Activated CD4-positive, alpha-beta T cell treated with anti-CD3 and anti-CD28 coated beads for 36 hours (primary cell): ENCODE measurements at regions of chr5 and their contacts with region 1.

Region 1: DNA sequence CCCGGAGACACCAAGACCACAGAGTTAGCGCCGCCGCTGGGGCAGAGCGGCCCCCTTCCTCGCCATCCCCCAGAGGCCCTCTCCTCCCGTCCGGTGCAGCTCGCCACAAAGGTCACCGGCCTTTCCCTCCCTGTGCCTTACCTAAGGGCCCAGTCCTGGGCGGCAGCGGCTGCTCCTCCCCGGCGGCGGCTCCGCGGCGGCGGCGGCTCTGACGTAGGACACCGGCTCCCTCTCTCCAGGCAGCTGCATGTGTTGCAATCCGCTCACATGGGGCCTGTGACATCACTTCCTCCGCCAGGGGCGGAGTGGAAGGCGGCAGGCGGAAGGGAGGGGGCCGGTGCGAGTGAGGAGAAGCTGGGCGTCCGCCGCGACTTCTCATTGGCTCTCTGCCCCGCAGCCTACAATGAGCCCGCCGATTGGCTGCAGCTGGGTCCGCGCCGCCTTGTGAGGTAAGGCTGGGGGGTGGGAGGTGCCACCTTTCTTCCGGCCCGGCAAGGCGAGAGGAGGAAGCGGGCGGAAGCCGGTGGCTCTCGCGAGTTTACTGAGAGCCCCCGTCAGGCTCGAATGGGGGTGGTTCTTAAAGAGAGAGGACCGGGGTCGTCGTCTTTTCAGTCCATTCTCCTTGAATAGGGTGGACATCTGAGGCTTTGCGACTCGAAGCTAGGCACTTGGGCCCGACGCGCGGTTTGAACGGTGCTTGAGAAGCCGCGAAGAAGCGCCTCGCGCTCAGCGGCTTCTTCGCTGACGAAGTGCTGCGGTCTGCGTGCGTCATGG is at the start of gene ETF1:
- DNase-seq: peak; percentile 100
- ATAC-seq: peak; percentile 94
- H3K4me3 Mint-ChIP-seq: peak within 1 kb of the TSS; percentile 100
- H3K27ac Mint-ChIP-seq: peak within 1 kb of the TSS; percentile 100
- H3K4me1 Mint-ChIP-seq: peaks cover 67% of the 10 kb centered on the region
- H3K27me3 Mint-ChIP-seq: no peaks in the 10 kb centered on the region
- total RNA-seq, gene ETF1: 140 to 156 TPM

Region 2: DNA sequence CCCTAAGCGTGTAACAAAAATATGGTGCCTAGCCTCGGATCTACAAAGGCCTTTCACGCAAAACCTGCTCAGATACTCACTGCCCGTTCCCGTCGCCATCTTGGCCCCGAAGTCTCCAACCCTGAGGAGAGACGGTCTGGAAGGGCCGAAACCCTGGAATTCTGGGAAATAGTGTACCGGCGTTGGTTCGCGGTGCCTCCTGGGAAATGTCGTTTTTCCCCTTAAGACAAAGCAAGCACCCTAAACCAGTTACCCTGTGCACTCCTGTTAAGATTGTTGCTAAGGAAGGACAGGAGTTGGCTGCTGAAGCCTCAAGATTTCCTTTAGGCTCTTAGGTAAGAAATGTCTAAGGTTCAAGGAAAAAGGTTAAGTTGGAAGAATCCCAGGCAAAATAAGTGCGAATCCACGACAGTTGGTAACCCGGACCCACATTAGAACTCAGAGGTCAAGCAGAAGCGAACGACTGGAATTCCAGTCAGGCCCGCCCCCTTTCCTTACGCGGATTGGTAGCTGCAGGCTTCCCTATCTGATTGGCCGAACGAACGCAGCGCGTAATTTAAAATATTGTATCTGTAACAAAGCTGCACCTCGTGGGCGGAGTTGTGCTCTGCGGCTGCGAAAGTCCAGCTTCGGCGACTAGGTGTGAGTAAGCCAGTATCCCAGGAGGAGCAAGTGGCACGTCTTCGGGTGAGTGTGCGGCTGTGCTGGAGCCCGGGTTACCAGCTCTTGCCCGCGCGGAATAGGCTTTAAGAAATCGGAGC is 364.4 kb before region 1 on chr5 and contains the starts of genes BRD8 and KIF20A:
- CTCF ChIA-PET with region 1: no interaction called
- POLR2A ChIA-PET with region 1: interaction called, 3 read pairs
- intact Hi-C with region 1: loop called (anchors 1 to 2 kb)
- DNase-seq: peak; percentile 96
- ATAC-seq: peak; percentile 93
- H3K4me3 Mint-ChIP-seq: no peak within 1 kb of the TSS
- H3K27ac Mint-ChIP-seq: peak within 1 kb of the TSS; percentile 73
- H3K4me1 Mint-ChIP-seq: peaks cover 16% of the 10 kb centered on the region
- H3K27me3 Mint-ChIP-seq: no peaks in the 10 kb centered on the region
- total RNA-seq, gene BRD8: 60.7 to 61.4 TPM
- total RNA-seq, gene KIF20A: 66.6 to 76.3 TPM

Region 3: GRCh38 chr5:138337685-138338410 is 205.3 kb before region 1 on chr5 and contains the start of gene FAM53C:
- CTCF ChIA-PET with region 1: no interaction called
- POLR2A ChIA-PET with region 1: interaction called, 6 read pairs
- intact Hi-C with region 1: loop called (anchors 1 kb)
- DNase-seq: peak; percentile 95
- ATAC-seq: peak; percentile 88
- H3K4me3 Mint-ChIP-seq: peak within 1 kb of the TSS; percentile 84
- H3K27ac Mint-ChIP-seq: peak within 1 kb of the TSS; percentile 97
- H3K4me1 Mint-ChIP-seq: peaks cover 38% of the 10 kb centered on the region
- H3K27me3 Mint-ChIP-seq: no peaks in the 10 kb centered on the region
- total RNA-seq, gene FAM53C: 22.8 to 25.9 TPM

Region 4: GRCh38 chr5:138491669-138492559 is 51.2 kb before region 1 on chr5:
- CTCF ChIA-PET with region 1: no interaction called
- POLR2A ChIA-PET with region 1: no interaction called
- intact Hi-C with region 1: loop called in 1 of 2 experiments (anchors 1 kb)
- DNase-seq: peak; percentile 92
- ATAC-seq: peak; percentile 99
- H3K4me3 Mint-ChIP-seq: peak overlapping the region; percentile 84
- H3K27ac Mint-ChIP-seq: peak overlapping the region; percentile 79
- H3K4me1 Mint-ChIP-seq: peaks cover 15% of the 10 kb centered on the region
- H3K27me3 Mint-ChIP-seq: peaks cover 23% of the 10 kb centered on the region

Region 5: DNA sequence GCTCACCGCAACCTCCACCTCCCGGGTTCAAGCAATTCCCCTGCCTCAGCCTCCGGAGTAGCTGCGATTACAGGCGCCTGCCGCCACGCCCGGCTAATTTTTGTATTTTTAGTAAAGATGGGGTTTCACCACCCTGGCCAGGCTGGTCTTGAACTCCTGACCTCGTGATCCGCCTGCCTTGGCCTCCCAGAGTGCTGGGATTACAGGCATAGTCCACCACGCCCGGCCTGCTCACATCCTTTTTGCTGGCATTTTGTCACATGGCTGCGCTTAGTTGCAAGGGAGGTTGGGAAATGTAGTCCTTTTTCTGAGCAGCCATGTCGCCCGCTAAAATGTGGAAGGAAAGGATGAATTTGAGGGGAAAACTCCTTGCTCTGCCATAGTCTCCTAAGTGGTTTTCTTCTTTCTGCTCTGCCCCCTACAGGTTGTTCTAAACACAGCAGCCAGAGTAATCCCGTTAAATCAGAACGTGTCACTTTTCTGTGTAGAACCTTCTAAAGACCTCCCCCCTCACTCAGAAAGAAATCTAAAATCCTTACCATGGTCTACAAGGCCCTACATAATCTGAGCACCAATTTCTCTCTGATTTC is 89.9 kb after region 1 on chr5:
- CTCF ChIA-PET with region 1: no interaction called
- POLR2A ChIA-PET with region 1: no interaction called
- intact Hi-C with region 1: loop called in 1 of 2 experiments (anchors 1 kb)
- DNase-seq: peak; percentile 47
- ATAC-seq: peak; percentile 88
- H3K4me3 Mint-ChIP-seq: no peak overlapping the region
- H3K27ac Mint-ChIP-seq: no peak overlapping the region
- H3K4me1 Mint-ChIP-seq: no peaks in the 10 kb centered on the region
- H3K27me3 Mint-ChIP-seq: peaks cover 36% of the 10 kb centered on the region

Region 6: DNA sequence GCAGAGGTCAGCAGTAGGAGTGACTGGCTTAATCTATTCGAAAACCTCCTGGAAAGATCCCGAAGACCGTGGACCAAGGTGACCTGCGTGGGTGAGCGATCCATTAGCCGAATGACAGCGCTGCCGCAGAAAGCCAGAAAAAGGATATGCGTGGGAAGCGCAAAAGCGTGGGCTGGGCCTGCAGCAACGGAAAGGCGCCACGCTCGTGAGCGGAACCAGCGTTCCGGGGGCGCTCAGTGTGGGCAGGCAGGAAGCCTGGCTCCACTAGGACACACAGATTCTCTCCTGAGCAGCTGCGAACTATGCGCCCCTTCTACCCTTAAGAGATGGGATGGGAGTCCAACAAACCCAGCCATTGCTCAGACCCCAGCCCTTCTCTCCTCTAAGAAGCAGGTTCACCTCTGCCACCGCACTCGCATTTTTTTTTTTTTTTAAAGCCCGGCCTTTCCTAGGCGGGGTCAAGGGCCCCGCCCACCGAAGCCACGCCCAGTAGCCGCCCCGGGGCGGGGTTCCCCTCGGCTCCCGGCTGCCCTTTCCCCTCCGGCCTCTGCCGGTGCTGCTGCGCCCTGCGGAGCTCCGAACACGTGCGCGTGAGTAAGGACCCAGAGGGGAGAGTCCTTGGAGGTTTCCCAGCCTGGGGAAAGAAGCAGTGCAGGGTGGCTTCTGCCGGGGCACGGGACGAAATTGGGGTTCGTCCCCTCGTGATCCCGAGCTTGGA is 730.6 kb after region 1 on chr5:
- CTCF ChIA-PET with region 1: no interaction called
- POLR2A ChIA-PET with region 1: no interaction called
- intact Hi-C with region 1: loop called in 1 of 2 experiments (anchors 1 kb)
- DNase-seq: peak; percentile 95
- ATAC-seq: peak; percentile 90
- H3K4me3 Mint-ChIP-seq: peak overlapping the region; percentile 95
- H3K27ac Mint-ChIP-seq: peak overlapping the region; percentile 88
- H3K4me1 Mint-ChIP-seq: peaks cover 54% of the 10 kb centered on the region
- H3K27me3 Mint-ChIP-seq: no peaks in the 10 kb centered on the region

Region 7: GRCh38 chr5:139341650-139342422 is 798.7 kb after region 1 on chr5 and contains the start of gene PAIP2:
- CTCF ChIA-PET with region 1: no interaction called
- POLR2A ChIA-PET with region 1: no interaction called
- intact Hi-C with region 1: loop called in 1 of 2 experiments (anchors 1 kb)
- DNase-seq: peak; percentile 99
- ATAC-seq: peak; percentile 88
- H3K4me3 Mint-ChIP-seq: peak within 1 kb of the TSS; percentile 88
- H3K27ac Mint-ChIP-seq: peak within 1 kb of the TSS; percentile 94
- H3K4me1 Mint-ChIP-seq: peaks cover 53% of the 10 kb centered on the region
- H3K27me3 Mint-ChIP-seq: no peaks in the 10 kb centered on the region
- total RNA-seq, gene PAIP2: 101 to 126 TPM

Region 8: GRCh38 chr5:139482050-139482889 is 939.1 kb after region 1 on chr5 and contains the start of gene STING1:
- CTCF ChIA-PET with region 1: no interaction called
- POLR2A ChIA-PET with region 1: no interaction called
- intact Hi-C with region 1: no loop called
- DNase-seq: peak; percentile 84
- ATAC-seq: peak; percentile 64
- H3K4me3 Mint-ChIP-seq: peak within 1 kb of the TSS; percentile 88
- H3K27ac Mint-ChIP-seq: peak within 1 kb of the TSS; percentile 99
- H3K4me1 Mint-ChIP-seq: peaks cover 35% of the 10 kb centered on the region
- H3K27me3 Mint-ChIP-seq: no peaks in the 10 kb centered on the region
- total RNA-seq, gene STING1: 178 to 183 TPM